SK-N-SH (cell line): ENCODE measurements at regions of chr1 and their contacts with region 1.

Region 1: DNA sequence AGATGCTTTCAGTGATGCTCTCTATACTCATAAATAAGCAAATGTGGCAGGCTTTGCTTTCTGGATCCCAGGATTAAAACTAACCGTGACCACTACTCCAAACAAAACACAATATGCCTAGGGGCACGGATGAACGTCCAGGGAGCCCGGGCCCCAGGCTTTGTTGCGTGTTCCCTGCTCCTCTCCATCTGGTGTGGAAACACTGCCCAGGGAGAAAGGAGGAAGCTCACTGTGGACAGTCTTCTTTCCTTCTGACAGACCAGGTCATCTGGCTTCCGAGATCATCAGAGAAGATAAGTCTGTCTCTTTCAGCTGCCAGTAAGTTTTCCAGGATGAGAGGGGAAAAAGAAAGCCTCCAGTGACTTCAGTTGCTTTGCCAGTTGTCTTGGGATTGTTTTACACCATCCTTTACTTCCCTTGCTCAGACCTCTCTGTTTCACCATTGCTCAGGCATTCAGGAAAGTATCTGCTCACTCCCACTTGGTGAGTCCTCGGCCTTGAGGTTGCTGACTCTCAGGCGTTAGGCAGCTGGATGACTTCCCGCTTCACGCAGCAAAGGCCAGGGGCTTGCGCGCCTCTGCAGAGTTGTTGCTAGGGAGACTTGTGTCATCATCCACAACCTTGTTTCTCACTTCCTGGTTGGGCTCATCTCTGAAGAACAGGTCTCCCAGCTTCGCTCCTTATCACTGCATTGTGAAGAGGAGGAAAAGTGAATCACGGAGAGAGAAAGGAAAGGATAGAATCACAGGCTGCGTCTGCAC is 20.6 kb upstream of the PGD start:
- DNase-seq: no peak
- H3K4me3 ChIP-seq: no peak overlapping the region
- H3K27ac ChIP-seq: peak overlapping the region in 1 of 2 experiments; percentile 43; a peak in 1 of 4 replicates
- H3K4me1 ChIP-seq: 0 out of 4 replicates have a peak, but pooled peaks cover 0 to 7% of the 10 kb centered on the region in 2 experiments
- H3K27me3 ChIP-seq: no peaks in the 10 kb centered on the region
- CTCF ChIP-seq: no peak
- EP300 ChIP-seq: no peak
- RAD21 ChIP-seq: no peak

Region 2: GRCh38 chr1:10368194-10368593 is 10.1 kb before region 1 on chr1:
- CTCF ChIA-PET with region 1: interaction called, 11 read pairs
- POLR2A ChIA-PET with region 1: no interaction called
- DNase-seq: no peak
- H3K4me3 ChIP-seq: no peak overlapping the region
- H3K27ac ChIP-seq: no peak overlapping the region
- H3K4me1 ChIP-seq: no peaks in the 10 kb centered on the region
- H3K27me3 ChIP-seq: no peaks in the 10 kb centered on the region
- CTCF ChIP-seq: no peak
- EP300 ChIP-seq: no peak
- RAD21 ChIP-seq: no peak

Region 3: GRCh38 chr1:10424034-10424433 is 45.8 kb after region 1 on chr1:
- CTCF ChIA-PET with region 1: interaction called, 30 read pairs
- POLR2A ChIA-PET with region 1: no interaction called
- DNase-seq: peak; percentile 44
- H3K4me3 ChIP-seq: no peak overlapping the region
- H3K27ac ChIP-seq: no peak overlapping the region
- H3K4me1 ChIP-seq: peaks cover 0 to 4% of the 10 kb centered on the region in 2 experiments; a peak in 1 of 4 replicates
- H3K27me3 ChIP-seq: no peaks in the 10 kb centered on the region
- CTCF ChIP-seq: no peak
- EP300 ChIP-seq: no peak
- RAD21 ChIP-seq: no peak